Tibial artery (tissue), 4 donors: ENCODE measurements at regions of chr13 and their contacts with region 1.

Region 1: DNA sequence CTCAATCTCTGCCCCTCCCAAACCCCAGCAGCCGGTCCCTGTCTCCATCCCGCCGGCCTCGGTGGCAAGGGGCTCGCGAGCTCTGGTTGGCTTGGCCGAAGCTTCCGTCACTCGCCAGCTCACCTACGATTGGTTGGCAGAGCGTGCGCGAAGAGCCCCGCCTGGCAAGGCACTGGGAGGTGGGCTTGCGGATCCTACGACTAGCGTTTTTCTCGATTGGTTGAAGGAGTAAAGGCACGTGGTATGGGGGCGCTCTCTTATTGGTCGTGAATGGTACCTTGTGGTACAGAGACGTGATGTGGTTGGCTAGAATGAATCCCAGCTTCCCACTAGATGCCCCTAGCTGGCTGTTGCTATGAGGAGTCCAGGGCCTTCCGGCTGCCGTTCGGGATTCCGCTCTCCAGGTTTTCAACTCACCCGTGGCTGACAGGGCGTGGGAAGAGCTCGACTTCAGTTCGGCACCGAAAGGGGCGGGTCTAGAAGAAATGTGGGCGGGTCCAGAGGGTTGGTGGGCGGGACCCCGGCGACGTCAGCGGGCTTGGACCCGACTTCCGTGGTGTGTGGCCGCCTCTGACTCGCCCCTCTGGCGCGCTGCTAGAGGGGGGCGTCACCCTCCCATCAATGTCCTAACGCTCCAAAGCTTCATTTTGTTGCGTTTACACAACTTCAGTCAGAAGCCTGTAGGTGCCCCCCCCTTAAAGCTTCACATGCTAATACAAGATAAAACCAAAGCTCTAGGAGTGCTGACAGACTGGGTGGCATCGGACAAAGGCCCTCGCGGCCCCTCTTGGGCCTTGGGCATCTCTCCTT is 847 bp upstream of the RAP2A start:
- DNase-seq: peak; percentile 99 to 100
- H3K4me3 ChIP-seq: peak overlapping the region; percentile 74 to 91
- H3K27ac ChIP-seq: peak overlapping the region; percentile 97 to 100
- H3K4me1 ChIP-seq: peaks cover 0 to 27% (median 0%) of the 10 kb centered on the region in 4 donors
- H3K27me3 ChIP-seq: no peaks in the 10 kb centered on the region
- CTCF ChIP-seq: peak in 1 of 2 experiments; percentile 9

Region 2: DNA sequence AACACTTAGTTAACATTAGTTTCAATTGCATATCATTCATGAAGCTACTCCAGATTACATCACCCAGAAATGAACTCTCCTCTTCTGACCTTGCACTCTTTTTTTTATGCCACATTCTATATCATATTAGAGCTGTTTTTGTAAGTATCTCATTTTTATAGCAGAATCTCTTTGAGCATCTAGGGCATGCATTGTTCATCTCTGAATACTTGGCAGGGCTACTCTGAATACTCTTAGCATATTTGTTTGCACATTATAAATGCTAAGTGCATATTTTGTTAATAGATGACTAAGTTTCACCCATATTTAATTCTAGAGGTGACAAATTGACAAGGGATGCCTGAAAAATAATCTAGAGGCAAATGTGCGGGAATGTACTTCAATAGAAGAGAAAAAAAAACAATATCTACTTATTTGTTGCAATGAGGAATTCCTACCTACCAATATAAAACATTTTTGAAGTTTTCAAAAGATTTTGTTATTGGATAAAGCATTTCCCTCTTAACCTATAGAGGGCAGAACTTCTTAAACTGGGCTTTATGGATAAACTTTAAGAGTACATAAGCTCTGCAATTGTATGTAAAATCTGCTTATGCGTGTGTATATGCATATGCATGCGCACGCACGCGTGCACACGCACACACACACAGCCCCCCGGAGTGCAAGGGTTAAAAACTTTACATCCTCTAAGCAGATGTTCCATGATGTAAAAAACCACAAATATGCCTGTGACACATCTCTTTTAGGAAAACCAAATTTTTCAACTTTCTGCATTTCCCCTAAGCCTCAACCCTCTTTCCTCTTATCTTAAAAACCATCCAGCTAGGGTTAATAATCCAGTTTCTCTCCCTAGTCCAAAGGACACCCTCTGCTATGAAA is 365.9 kb before region 1 on chr13:
- intact Hi-C with region 1: no loop called
- DNase-seq: no peak
- H3K4me3 ChIP-seq: no peak overlapping the region
- H3K27ac ChIP-seq: no peak overlapping the region
- H3K4me1 ChIP-seq: no peaks in the 10 kb centered on the region
- H3K27me3 ChIP-seq: peaks cover 0 to 2% of the 10 kb centered on the region in 2 donors
- CTCF ChIP-seq: no peak

Region 3: DNA sequence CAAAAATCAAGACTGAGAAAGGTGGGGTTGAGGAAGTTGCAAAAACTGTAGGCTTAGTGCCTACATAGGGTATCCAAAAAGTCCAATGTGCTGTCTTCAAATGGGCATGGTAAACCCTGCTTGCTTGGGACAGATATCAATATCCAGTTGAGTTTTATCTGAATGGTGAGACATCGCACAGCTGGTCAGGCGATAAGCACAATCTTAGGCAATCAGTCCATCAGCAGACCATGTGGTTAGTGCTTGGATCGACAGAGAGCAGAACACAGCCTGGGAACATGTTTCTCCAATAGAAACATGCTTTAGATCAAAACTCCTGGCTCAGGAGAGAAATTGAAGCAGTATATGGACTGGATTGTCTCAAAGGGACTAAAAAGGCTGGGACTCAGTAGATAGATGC is 369.1 kb after region 1 on chr13:
- intact Hi-C with region 1: loop called (anchors 5 kb)
- DNase-seq: no peak
- H3K4me3 ChIP-seq: no peak overlapping the region
- H3K27ac ChIP-seq: no peak overlapping the region
- H3K4me1 ChIP-seq: no peaks in the 10 kb centered on the region
- H3K27me3 ChIP-seq: no peaks in the 10 kb centered on the region
- CTCF ChIP-seq: no peak

Region 4: GRCh38 chr13:97975848-97976609 is 542.9 kb after region 1 on chr13:
- intact Hi-C with region 1: loop called (anchors 5 kb)
- DNase-seq: peak; percentile 85 to 93
- H3K4me3 ChIP-seq: peak overlapping the region; percentile 80 to 96
- H3K27ac ChIP-seq: peak overlapping the region; percentile 94 to 97
- H3K4me1 ChIP-seq: peaks cover 0 to 40% (median 12%) of the 10 kb centered on the region in 4 donors
- H3K27me3 ChIP-seq: no peaks in the 10 kb centered on the region
- CTCF ChIP-seq: no peak